ENCODE measurements at regions of chr15 and their contacts with region 1.

Region 1: DNA sequence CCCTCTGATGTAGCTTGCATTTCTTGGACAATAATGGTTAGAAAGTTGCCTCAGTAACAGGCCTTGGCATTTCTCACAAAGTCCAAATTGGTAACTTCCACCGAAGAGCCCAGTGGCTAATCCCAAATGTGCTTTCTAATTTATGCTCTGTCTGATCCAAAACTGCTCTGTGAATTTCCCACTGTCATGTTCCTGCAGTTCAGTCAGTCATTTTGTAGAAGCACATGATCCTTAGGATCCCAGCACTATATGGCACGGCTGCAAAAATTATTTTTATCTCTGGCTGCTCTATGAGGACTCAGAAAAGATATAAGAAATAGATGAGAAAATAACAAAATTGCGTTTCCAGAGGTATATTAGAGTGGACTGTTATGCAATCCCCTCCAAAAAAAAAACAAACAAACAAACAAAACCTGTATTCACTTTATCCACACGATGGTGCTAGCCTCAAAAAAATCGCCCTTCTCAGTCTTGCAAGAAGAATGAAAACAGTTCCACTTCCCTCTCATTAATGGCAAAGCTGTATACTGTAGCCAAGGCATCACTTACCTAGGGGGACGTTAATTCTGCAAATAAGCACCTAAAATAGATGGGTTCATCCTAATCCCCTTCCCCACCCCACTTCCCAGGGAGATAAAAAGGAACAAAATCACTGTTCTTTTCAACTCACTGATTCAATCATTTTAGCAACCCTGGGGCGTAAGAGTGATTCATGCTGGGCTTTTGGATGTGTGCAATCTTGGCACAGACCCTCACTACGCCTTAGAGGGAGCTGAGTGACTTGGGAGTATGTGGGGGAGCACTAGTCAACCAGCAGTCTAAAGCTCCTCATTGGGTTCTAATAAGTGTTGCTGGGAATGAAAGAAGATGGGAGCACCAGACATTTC is 61.3 kb downstream of the TMCO5A start:
- DNase-seq: no peak
- H3K4me3 ChIP-seq: no peak overlapping the region
- CTCF ChIP-seq: peak; percentile 36

Region 2: GRCh38 chr15:37872661-37873060 is 123.0 kb before region 1 on chr15:
- CTCF ChIA-PET with region 1: no interaction called
- POLR2A ChIA-PET with region 1: no interaction called
- DNase-seq: no peak
- H3K4me3 ChIP-seq: no peak overlapping the region
- CTCF ChIP-seq: no peak

Region 3: GRCh38 chr15:37933666-37934065 is 62.0 kb before region 1 on chr15:
- CTCF ChIA-PET with region 1: no interaction called
- POLR2A ChIA-PET with region 1: no interaction called
- DNase-seq: peak; percentile 71
- H3K4me3 ChIP-seq: no peak overlapping the region
- CTCF ChIP-seq: no peak

Region 4: DNA sequence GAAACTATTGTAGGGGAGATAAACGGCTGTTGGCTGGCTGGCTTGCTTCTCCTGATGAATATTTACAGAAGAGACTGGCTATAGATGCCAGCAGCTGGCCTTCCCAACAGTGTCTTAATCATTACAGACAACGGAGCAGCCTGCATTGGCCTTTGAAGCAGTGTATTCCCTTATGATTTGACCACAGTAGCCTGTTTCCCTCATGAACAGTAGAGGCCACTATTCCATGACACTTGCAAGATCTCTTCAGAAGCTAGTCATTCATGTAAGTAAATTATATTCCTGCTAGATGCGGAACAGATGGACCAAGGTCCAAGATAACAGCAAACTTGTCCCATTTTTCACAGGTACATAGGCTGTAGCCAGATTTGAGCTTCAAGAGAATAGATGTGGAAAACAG is 13.9 kb before region 1 on chr15:
- CTCF ChIA-PET with region 1: interaction called, 21 read pairs
- POLR2A ChIA-PET with region 1: no interaction called
- DNase-seq: no peak
- H3K4me3 ChIP-seq: no peak overlapping the region
- CTCF ChIP-seq: peak; percentile 39

Region 5: GRCh38 chr15:38111070-38111469 is 115.4 kb after region 1 on chr15:
- CTCF ChIA-PET with region 1: no interaction called
- POLR2A ChIA-PET with region 1: no interaction called
- DNase-seq: no peak
- H3K4me3 ChIP-seq: no peak overlapping the region
- CTCF ChIP-seq: no peak

Region 6: DNA sequence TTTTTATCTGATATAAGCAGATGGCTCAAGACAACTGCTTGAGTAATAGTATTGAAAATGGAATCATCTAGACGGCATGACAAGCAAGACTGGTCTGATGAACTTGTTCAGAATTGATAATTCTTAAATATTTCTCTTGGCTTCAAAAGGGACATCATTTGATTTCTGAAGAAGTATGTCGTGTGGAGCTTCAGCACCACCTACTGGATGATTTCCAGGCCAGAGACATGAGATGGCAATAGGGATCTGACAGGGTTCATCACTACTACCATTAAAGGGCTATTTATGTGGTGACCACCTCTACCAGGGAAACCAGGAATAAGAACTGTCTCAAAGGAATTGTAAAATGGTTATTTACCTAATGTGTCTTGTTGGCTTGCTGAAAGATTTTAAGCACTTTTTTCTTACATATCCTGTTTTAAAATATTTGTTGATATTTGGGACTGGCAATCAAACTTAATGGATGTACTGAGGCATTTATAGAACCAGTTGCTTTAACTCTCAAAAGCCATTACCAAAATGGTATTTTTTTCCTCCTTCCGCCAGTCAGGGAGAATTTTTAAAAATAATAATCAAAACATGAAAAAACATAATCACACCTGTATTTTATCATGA is 358.7 kb after region 1 on chr15:
- CTCF ChIA-PET with region 1: interaction called, 70 read pairs
- POLR2A ChIA-PET with region 1: no interaction called
- DNase-seq: no peak
- H3K4me3 ChIP-seq: no peak overlapping the region
- CTCF ChIP-seq: peak; percentile 64

Region 7: DNA sequence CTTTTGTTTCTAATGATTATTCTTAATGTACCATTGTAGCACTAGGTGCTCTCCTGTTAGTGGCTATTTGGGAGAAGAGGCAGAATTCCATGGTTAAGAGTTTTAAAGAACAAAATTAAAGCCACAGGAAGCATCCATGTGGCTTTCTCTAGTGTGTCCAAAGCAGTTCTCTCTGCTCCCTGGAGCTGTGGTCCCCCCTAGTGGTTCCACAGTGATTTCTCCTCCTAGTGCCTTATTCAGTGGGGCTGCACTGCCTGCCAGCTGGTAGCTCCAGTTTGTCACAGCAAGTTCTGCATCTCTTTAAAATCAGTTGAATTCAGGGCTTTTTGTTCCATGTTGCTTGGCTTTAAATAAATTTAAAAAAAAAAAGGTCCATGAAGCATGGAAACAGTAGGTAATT is 418.7 kb after region 1 on chr15:
- CTCF ChIA-PET with region 1: interaction called, 65 read pairs
- POLR2A ChIA-PET with region 1: no interaction called
- DNase-seq: peak; percentile 12
- H3K4me3 ChIP-seq: no peak overlapping the region
- CTCF ChIP-seq: peak; percentile 84

Region 8: DNA sequence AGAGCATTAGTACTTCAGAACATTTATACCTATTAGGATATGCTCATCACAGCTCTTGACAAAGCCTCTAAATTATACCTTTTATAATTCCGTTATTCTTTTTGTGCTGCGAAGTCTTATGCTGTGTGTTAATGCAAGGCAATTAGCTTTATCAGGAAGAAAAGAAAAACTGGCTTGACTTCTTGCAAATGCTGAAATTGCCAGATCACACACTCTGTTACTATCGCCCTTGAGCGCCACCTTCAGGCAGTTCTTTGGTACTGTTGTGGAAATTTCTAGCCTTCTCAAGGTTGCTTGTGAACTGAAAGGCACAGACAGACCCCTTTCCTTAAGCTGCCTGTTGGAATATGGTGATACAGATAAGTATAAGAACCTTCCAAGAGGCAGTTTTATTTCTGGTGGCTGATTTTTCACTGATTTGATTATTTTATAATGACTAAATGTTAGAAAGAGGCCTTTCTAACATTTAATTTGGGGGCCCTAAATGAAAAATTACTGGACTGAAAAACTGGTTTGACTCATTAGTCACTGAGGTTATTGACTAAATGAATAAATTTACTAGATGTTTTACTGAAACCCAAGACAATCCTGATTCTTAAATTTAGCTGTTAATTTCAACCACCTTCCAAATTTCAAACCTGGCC is 695.1 kb after region 1 on chr15:
- CTCF ChIA-PET with region 1: interaction called, 41 read pairs
- POLR2A ChIA-PET with region 1: no interaction called
- DNase-seq: no peak
- H3K4me3 ChIP-seq: no peak overlapping the region
- CTCF ChIP-seq: peak; percentile 77

Measured in AG04449 (cell line).